ENCODE measurements at regions of chr11 and their contacts with region 1.

Region 1: GRCh38 chr11:66022401-66023185 is 3.7 kb downstream of the CATSPER1 start:
- DNase-seq: peak; percentile 85
- H3K4me3 Mint-ChIP-seq: no peak overlapping the region
- H3K27ac Mint-ChIP-seq: no peak overlapping the region
- H3K4me1 Mint-ChIP-seq: peaks cover 16% of the 10 kb centered on the region
- H3K27me3 Mint-ChIP-seq: peaks cover 52% of the 10 kb centered on the region

Region 2: DNA sequence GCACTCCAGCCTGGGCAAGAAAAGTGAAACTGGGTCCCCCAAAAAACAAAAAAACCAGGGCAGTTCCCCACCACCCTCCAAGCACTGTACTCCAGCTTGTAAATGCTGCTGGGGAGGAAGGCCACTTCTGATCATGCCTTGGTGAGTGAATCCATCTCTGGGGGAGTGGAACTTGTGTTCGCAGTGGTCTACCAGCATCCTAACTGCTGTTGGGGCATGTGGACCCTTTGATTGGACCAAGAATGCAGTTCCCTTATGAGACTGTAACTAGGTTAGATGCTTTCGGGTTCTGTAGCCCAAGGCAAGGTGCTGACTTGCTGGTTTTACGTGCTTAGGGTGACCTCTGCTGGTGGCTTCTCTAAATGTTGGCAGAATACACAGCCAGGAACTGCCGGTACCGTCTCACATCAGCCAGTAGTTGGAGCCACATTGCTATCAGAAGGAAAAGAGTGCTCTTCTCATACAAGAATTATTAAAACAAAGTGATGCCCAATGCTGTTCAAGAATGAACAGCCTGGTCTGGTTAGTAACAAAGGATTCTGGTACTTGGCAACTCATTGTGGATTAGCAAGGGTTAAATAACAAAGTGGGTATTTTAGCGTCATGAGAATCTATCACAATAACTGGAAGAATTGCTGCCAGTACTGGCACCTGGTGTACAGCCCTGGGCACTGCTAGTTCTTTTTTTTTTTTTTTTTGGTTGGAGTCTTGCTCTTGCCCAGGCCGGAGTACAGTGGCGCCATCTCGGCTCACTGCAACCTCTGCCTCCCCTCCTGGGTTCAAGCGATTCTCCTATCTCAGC is 33.6 kb before region 1 on chr11:
- CTCF ChIA-PET with region 1: interaction called, 16 read pairs
- DNase-seq: peak; percentile 96
- H3K4me3 Mint-ChIP-seq: no peak overlapping the region
- H3K27ac Mint-ChIP-seq: peak overlapping the region; percentile 74
- H3K4me1 Mint-ChIP-seq: peaks cover 6% of the 10 kb centered on the region
- H3K27me3 Mint-ChIP-seq: no peaks in the 10 kb centered on the region

Region 3: GRCh38 chr11:66011239-66011784 is 11.3 kb before region 1 on chr11:
- CTCF ChIA-PET with region 1: interaction called, 15 read pairs
- DNase-seq: no peak
- H3K4me3 Mint-ChIP-seq: no peak overlapping the region
- H3K27ac Mint-ChIP-seq: no peak overlapping the region
- H3K4me1 Mint-ChIP-seq: peaks cover 2% of the 10 kb centered on the region
- H3K27me3 Mint-ChIP-seq: peaks cover 49% of the 10 kb centered on the region

Region 4: DNA sequence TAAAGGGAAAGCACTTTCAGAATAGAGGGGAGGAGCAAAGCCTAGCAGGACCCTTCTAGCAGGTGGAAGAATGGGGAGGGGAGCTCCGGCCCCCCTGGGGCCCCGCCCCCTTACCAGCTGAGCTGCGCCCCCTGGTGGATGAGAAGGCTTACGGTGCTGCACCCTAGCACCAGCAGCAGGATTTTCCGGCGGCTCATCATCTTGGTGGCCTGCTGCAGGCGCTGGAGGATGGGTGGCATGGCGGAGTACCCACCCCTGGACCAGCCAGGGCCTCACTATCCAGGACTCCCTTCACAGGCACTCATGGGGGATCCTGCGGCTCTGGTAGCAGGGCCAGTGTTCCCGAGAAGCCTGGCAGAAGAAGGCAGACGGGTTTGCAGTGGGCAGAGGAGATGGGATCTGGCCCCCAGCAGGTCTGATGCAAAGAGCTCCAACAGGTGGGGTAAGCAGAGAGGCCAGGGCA is 22.6 kb after region 1 on chr11:
- CTCF ChIA-PET with region 1: interaction called, 32 read pairs
- DNase-seq: peak; percentile 89
- H3K4me3 Mint-ChIP-seq: no peak overlapping the region
- H3K27ac Mint-ChIP-seq: peak overlapping the region; percentile 30
- H3K4me1 Mint-ChIP-seq: peaks cover 25% of the 10 kb centered on the region
- H3K27me3 Mint-ChIP-seq: peaks cover 70% of the 10 kb centered on the region

Region 5: GRCh38 chr11:66081505-66081904 is 58.9 kb after region 1 on chr11:
- CTCF ChIA-PET with region 1: no interaction called
- DNase-seq: peak; percentile 91
- H3K4me3 Mint-ChIP-seq: peak overlapping the region; percentile 83
- H3K27ac Mint-ChIP-seq: peak overlapping the region; percentile 100
- H3K4me1 Mint-ChIP-seq: peaks cover 78% of the 10 kb centered on the region
- H3K27me3 Mint-ChIP-seq: no peaks in the 10 kb centered on the region

Region 6: GRCh38 chr11:66438504-66439466 is 416.2 kb after region 1 on chr11 and contains the start of gene MRPL11:
- CTCF ChIA-PET with region 1: no interaction called
- DNase-seq: peak; percentile 94
- H3K4me3 Mint-ChIP-seq: peak within 1 kb of the TSS; percentile 88
- H3K27ac Mint-ChIP-seq: peak within 1 kb of the TSS; percentile 90
- H3K4me1 Mint-ChIP-seq: peaks cover 19% of the 10 kb centered on the region
- H3K27me3 Mint-ChIP-seq: no peaks in the 10 kb centered on the region

Measured in activated naive CD4-positive, alpha-beta T cell treated with anti-CD3 and anti-CD28 coated beads, Interleukin-2, amount 10 ng/mL, durations not matched to agents 7 days and 5 days (primary cell).